AG04450 (cell line): ENCODE measurements at regions of chr4 and their contacts with region 1.

Region 1: DNA sequence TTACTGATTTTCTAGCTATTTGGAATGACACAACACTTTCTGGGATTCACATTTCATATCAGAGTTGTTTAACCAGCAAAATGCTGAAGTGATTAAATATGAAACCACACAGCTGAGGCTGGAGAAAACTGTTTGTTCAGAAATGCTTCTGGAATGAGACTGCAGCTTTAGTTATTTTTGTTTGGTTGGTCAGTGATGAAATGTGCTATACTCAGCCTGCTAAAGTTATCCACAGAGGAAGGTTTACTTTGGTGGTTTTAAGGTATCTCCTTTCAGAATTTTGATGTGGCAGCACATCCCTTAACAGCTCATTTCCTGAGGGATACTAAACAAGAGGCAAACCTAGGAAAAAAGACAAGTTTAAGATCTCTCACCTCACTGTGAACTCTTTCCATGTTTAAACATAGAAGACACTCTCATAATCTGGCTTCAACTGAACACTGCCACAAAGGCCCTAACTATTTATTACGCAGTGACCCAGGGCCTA is 106.6 kb upstream of the PDE5A start:
- DNase-seq: peak; percentile 97
- H3K4me3 ChIP-seq: no peak overlapping the region
- H3K27ac ChIP-seq: no peak overlapping the region
- H3K27me3 ChIP-seq: no peaks in the 10 kb centered on the region
- CTCF ChIP-seq: no peak

Region 2: GRCh38 chr4:119623025-119623424 is 112.2 kb before region 1 on chr4:
- CTCF ChIA-PET with region 1: interaction called, 13 read pairs
- POLR2A ChIA-PET with region 1: interaction called, 60 read pairs
- DNase-seq: no peak
- H3K4me3 ChIP-seq: peak overlapping the region; percentile 85
- H3K27ac ChIP-seq: no peak overlapping the region
- H3K27me3 ChIP-seq: no peaks in the 10 kb centered on the region
- CTCF ChIP-seq: no peak

Region 3: GRCh38 chr4:119659616-119660015 is 75.6 kb before region 1 on chr4:
- CTCF ChIA-PET with region 1: no interaction called
- POLR2A ChIA-PET with region 1: interaction called, 12 read pairs
- DNase-seq: no peak
- H3K4me3 ChIP-seq: no peak overlapping the region
- H3K27ac ChIP-seq: no peak overlapping the region
- H3K27me3 ChIP-seq: no peaks in the 10 kb centered on the region
- CTCF ChIP-seq: no peak

Region 4: GRCh38 chr4:119683518-119683917 is 51.7 kb before region 1 on chr4:
- CTCF ChIA-PET with region 1: interaction called, 3 read pairs
- POLR2A ChIA-PET with region 1: interaction called, 27 read pairs
- DNase-seq: peak; percentile 72
- H3K4me3 ChIP-seq: no peak overlapping the region
- H3K27ac ChIP-seq: no peak overlapping the region
- H3K27me3 ChIP-seq: no peaks in the 10 kb centered on the region
- CTCF ChIP-seq: no peak